ENCODE measurements at regions of chr7 and their contacts with region 1.

Region 1: DNA sequence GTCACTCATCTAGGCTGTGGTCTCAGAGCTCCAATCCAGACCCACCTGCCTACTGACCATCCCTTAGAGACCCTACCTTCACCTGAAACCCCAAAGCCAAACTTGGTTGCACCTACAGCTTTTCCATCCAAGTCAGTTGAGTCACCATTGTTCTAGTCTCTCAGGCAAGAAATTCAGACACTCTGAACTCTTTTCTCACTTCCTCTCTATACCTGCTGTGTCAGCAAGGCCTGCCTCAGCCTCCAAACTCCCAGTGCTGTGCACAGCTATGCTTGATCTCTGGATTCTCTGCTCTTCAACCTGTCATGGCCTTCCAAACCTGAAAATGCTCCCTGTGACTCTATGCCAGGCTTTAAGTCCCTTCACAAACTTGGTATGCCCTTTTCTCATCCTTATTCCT is 47.4 kb upstream of the MTURN start:
- DNase-seq: no peak
- ATAC-seq: peak; percentile 36; the same call in 1 of the 3 replicates
- H3K4me3 ChIP-seq: no peak overlapping the region
- H3K27ac ChIP-seq: no peak overlapping the region
- H3K4me1 ChIP-seq: peaks cover 6% of the 10 kb centered on the region
- H3K27me3 ChIP-seq: no peaks in the 10 kb centered on the region
- CTCF ChIP-seq: no peak
- EP300 ChIP-seq: no peak
- POLR2A ChIP-seq: no peak
- RAD21 ChIP-seq: no peak

Region 2: DNA sequence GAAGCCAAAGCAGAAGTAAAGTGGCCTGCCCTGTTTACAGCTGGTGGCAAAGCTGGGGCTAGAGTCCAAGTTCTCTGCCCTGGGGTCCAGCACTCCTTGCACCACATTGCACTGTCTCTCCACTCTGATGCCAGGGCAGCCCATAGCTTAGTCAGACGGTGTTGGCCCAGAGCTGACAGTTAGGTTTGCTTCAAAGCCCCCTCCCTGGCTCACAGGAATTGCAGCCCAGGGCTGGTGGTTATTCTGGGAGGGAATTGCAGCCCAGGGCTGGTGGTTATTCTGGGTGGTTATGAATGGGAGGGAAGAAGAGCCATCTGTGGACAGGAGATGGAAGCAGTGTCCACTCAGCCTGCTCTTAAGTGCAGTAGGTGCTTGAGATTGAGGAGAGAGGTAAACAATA is 186.6 kb before region 1 on chr7:
- CTCF ChIA-PET with region 1: no interaction called
- POLR2A ChIA-PET with region 1: no interaction called
- RAD21 ChIA-PET with region 1: no interaction called
- SMC1A ChIA-PET with region 1: no interaction called
- in situ Hi-C with region 1: no loop called
- intact Hi-C with region 1: no loop called
- DNase-seq: no peak
- ATAC-seq: no peak
- H3K4me3 ChIP-seq: no peak overlapping the region
- H3K27ac ChIP-seq: no peak overlapping the region
- H3K4me1 ChIP-seq: no peaks in the 10 kb centered on the region
- H3K27me3 ChIP-seq: no peaks in the 10 kb centered on the region
- CTCF ChIP-seq: no peak
- EP300 ChIP-seq: no peak
- POLR2A ChIP-seq: no peak
- RAD21 ChIP-seq: no peak

Region 3: GRCh38 chr7:30074422-30075030 is 12.8 kb before region 1 on chr7:
- CTCF ChIA-PET with region 1: interaction called, 17 read pairs
- POLR2A ChIA-PET with region 1: no interaction called
- RAD21 ChIA-PET with region 1: no interaction called
- SMC1A ChIA-PET with region 1: interaction called, 8 read pairs
- in situ Hi-C with region 1: no loop called
- intact Hi-C with region 1: no loop called
- DNase-seq: no peak
- ATAC-seq: peak; percentile 57
- H3K4me3 ChIP-seq: no peak overlapping the region
- H3K27ac ChIP-seq: no peak overlapping the region
- H3K4me1 ChIP-seq: no peaks in the 10 kb centered on the region
- H3K27me3 ChIP-seq: no peaks in the 10 kb centered on the region
- CTCF ChIP-seq: peak; percentile 41 to 55 (median 55); a peak in 3 of 6 replicates
- EP300 ChIP-seq: no peak
- POLR2A ChIP-seq: no peak
- RAD21 ChIP-seq: peak; percentile 40; the same call in 1 of the 2 replicates

Measured in GM12878 (cell line).